Sciatic nerve (tissue), 2 donors: ENCODE measurements at regions of chr14 and their contacts with region 1.

Region 1: DNA sequence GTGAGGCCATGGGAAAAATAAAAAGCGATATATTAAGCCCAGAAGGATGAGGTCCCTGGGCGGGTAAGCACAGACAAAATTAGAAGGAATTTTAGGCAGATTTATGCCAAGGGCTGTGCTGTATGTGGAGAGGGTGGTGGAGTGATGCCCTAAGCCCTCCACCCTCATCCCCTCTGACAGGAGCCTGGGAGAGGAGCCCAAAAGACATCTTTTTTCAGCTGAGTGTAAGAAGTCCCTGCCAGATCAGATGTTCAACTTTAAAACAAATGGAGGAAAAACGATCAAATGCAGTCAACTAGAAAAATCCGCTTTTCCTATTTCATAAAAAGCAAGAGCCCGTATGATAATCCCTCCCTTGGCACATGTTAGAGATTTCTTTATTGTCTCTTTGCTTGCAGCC is 47.7 kb upstream of the NRXN3 start:
- DNase-seq: no peak
- ATAC-seq: no peak

Region 2: DNA sequence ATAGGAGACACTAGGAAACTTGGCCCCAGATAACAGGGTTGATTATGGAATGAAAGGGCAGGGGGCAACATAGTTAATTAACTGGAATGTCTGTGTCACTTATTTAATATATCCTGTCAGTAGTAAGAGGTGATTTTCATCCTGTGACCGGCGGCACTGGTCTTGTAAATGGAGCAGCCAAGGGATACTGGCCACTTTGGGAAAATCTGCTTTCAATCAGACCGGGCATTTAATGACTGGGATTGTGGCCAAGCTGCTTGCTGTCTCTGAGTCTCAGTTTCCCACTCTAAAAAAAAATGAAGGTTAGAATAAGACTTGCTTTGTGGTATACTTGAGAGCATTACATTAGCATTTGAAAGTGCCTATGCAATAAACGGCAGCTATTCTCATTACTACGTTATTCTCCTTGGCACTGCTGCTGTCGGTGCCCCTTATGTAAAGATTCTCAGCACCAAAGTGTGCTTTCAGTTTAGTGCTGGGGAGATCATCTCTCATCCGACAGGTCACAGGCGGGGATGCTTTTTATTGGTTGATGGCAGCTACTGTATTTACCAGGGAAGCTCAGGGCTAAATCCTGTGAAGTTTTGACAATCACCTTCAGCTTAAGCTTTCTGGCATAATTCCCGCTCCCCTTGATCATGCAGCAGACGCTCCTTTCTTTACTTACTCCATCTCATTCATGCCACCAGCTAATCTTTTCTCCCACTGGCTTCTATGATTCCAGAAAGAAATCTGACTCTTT is 1584.4 kb before region 1 on chr14:
- intact Hi-C with region 1: loop called (anchors 5 kb)
- DNase-seq: no peak
- ATAC-seq: no peak

Region 3: DNA sequence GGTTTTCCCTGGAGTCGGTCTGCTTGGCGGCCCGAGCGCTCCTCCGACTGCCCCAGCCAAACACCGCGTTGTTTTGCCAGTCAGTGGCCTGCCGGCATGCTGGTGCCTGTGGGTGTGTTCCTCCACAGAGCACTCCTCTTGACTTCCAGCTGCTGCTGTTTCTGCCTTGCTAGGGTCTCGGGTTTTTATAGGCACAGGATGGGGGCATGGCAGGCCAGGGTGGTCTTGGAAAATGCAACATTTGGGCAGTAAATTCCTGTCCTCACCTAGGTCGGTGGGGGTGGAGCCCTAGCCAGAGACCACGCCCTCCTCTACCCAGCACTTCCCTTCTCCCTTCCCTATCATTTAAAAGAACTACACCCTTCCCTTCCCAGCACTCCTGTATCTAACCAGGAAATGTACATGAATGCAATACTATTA is 1395.9 kb before region 1 on chr14:
- intact Hi-C with region 1: no loop called
- DNase-seq: no peak
- ATAC-seq: no peak

Region 4: GRCh38 chr14:77542421-77543239 is 579.8 kb before region 1 on chr14:
- intact Hi-C with region 1: loop called (anchors 5 kb)
- DNase-seq: no peak
- ATAC-seq: peak; percentile 63

Region 5: GRCh38 chr14:77730976-77731497 is 391.4 kb before region 1 on chr14:
- intact Hi-C with region 1: no loop called
- DNase-seq: no peak
- ATAC-seq: no peak

Region 6: DNA sequence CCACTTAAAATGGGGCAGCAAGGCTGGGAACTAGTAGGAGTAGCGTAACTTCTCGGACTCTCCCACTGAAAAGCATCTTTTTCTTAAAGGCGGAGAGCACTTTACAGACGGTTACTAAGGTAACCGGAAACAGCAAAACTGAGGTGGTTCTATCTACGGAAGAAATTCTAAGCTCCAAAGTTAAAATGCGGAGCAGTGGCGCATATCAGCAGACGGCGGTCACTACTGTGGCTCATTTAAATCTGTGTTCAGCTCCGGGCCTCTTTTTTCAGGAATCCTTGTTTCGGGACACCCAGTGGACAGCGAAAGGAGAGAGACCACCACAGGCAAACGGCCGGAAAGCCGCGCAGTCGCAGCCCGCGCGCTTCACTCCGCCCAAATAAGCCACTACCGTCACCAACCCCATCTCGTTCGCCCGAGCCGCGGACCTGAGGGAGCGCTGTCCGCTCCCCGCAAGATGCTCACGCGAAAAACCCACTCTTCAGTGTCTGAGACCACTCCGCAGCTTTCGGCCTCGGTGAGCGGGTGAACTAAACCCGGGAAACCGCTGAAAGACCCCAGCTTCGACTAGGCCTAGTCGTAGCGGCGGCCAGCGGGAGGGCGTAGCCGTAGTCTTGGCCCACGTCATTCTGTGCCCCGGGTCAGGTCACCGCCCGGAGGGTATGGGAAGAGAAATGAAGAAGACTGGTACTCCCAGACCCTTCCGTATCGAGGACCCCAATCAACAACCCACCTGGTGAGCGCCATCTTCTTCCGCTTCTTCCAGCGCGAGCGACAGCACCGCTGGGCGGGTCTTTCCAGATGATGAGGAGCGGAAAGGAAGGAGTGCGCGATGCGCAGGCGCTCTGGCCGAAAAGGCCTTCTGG is 361.8 kb before region 1 on chr14 and contains the start of gene SNW1:
- intact Hi-C with region 1: no loop called
- DNase-seq: peak; percentile 95
- ATAC-seq: peak; percentile 99
- total RNA-seq, gene SNW1: 69.3 TPM